Endothelial cell of umbilical vein (primary cell): ENCODE measurements at regions of chr4 and their contacts with region 1.

Region 1: DNA sequence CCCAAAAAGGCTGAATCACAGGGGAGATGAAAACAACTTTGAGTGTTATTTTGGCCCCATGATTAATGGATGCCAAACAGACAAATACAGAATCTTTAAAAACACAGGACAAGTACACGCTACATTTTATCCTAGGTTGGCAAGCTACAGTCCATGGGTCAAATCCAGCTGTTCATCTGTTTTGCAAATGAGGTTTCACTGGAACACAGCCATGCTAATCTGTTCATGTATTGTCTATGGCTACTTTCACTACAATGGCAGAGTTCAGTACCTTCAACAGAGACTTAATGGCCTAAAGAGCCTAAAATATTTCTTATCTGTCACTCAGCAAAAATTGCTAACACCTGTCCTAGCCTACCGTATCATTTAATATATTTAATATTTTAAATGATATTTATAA is 1548.5 kb upstream of the IGFBP7 start:
- DNase-seq: no peak
- H3K4me3 ChIP-seq: no peak overlapping the region
- H3K27ac ChIP-seq: no peak overlapping the region
- H3K4me1 ChIP-seq: no peaks in the 10 kb centered on the region
- H3K27me3 ChIP-seq: no peaks in the 10 kb centered on the region
- CTCF ChIP-seq: no peak
- POLR2A ChIP-seq: no peak

Region 2: GRCh38 chr4:59258002-59258401 is 599.3 kb after region 1 on chr4:
- CTCF ChIA-PET with region 1: no interaction called
- POLR2A ChIA-PET with region 1: no interaction called
- dilution Hi-C with region 1: no loop called
- intact Hi-C with region 1: loop called (anchors 5 kb)
- DNase-seq: no peak
- H3K4me3 ChIP-seq: no peak overlapping the region
- H3K27ac ChIP-seq: no peak overlapping the region
- H3K4me1 ChIP-seq: no peaks in the 10 kb centered on the region
- H3K27me3 ChIP-seq: no peaks in the 10 kb centered on the region
- CTCF ChIP-seq: no peak
- POLR2A ChIP-seq: no peak